ENCODE measurements at regions of chr18 and their contacts with region 1.

Region 1: DNA sequence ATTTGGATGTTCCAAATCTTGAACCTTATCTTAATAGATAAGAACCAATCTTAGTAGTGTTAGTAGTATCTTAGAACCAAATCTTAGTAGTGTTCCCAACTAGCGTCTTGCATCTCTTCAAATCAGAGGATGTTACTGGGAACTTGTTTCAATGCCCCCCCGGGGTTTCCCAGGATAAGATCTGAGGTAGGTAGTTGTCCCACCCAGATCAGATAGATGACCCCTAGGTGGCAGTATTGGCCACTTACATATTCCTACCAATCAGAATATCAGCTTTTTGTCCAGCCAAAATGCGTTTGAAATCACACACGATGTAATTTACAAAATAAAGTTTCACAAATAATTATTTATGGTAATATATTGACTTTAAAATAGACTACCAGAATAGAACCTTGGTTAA is 314.8 kb downstream of the MBD2 start:
- DNase-seq: peak; percentile 63
- H3K4me3 Mint-ChIP-seq: no peak overlapping the region
- H3K27ac Mint-ChIP-seq: no peak overlapping the region
- H3K4me1 Mint-ChIP-seq: no peaks in the 10 kb centered on the region
- H3K27me3 Mint-ChIP-seq: peaks cover 11% of the 10 kb centered on the region
- CTCF ChIP-seq: peak; percentile 57

Region 2: GRCh38 chr18:54119524-54120019 is 209.9 kb after region 1 on chr18:
- CTCF ChIA-PET with region 1: interaction called, 12 read pairs
- POLR2A ChIA-PET with region 1: no interaction called
- intact Hi-C with region 1: loop called (anchors 1 kb)
- DNase-seq: peak; percentile 68
- H3K4me3 Mint-ChIP-seq: peak overlapping the region; percentile 3
- H3K27ac Mint-ChIP-seq: peak overlapping the region; percentile 62
- H3K4me1 Mint-ChIP-seq: peaks cover 13% of the 10 kb centered on the region
- H3K27me3 Mint-ChIP-seq: no peaks in the 10 kb centered on the region
- CTCF ChIP-seq: peak; percentile 44

Measured in MCF 10A (cell line).